ENCODE measurements at regions of chr1 and their contacts with region 1.

Region 1: GRCh38 chr1:38990738-38991639 is at the start of gene AKIRIN1:
- DNase-seq: peak; percentile 84
- ATAC-seq: peak; percentile 95
- H3K4me3 ChIP-seq: peak within 1 kb of the TSS; percentile 100
- H3K27ac ChIP-seq: peak within 1 kb of the TSS; percentile 85
- H3K4me1 ChIP-seq: no peaks in the 10 kb centered on the region
- H3K27me3 ChIP-seq: no peaks in the 10 kb centered on the region
- CTCF ChIP-seq: no peak
- EP300 ChIP-seq: no peak
- POLR2A ChIP-seq: peak; percentile 99
- RAD21 ChIP-seq: no peak
- polyA plus RNA-seq, gene AKIRIN1: 7.5 to 16.3 TPM

Region 2: DNA sequence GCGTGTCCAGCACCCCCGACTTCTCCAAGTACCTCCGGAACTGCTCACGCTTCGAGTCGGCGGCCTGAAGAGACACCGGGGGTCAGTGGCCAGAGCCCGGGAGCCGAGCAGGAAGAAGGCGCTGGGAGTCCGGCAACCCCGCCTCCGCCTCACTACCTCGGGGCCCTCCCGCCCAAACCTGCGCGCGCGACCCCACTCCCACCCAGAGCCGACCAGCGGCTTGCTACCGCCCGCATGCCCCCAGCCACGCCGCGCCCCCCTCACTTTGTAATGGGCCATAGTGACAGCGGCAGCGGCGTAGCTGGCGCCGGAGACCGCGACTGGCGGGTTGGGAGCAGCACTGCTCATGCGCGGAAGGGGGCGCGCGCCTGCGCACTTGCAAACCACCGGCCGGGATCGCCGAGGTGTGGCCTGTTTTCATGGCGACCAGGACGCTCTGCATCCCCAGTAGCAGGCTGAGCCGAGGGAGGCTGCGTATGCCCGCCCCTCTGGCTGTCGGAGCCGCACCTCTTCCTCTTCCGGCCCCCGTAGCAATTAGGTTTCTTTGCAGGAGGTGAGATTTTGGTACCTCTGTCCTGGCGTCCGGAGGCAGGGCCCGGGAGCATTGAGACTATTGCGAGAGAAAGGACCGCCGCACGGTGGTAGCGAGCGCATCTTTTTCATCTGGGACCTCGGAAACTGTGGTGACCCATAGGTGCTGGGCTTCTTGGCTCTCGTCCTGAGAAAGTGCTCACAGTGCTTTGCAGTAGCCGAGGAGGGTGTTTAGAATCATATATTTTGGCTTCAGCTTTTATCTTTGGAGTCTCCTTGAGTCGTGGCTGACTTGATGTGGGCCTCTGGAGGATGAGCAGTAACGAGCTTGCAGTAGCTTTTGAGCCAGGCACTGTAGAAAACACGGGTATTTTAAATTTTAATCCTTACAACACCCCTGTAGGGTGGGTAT is 117.7 kb before region 1 on chr1 and contains the start of gene MYCBP:
- CTCF ChIA-PET with region 1: no interaction called
- POLR2A ChIA-PET with region 1: interaction called, 3 read pairs
- RAD21 ChIA-PET with region 1: interaction called, 4 read pairs
- SMC1A ChIA-PET with region 1: no interaction called
- in situ Hi-C with region 1: no loop called
- intact Hi-C with region 1: loop called (anchors 5 kb)
- DNase-seq: peak; percentile 92
- ATAC-seq: peak; percentile 99
- H3K4me3 ChIP-seq: peak within 1 kb of the TSS; percentile 82
- H3K27ac ChIP-seq: peak within 1 kb of the TSS; percentile 78
- H3K4me1 ChIP-seq: peaks cover 17% of the 10 kb centered on the region
- H3K27me3 ChIP-seq: no peaks in the 10 kb centered on the region
- CTCF ChIP-seq: 0 out of 6 replicates have a peak, but pooled peaks of 1 of the 3 experiments have one; percentile 1
- EP300 ChIP-seq: no peak
- POLR2A ChIP-seq: peak; percentile 77
- RAD21 ChIP-seq: no peak
- polyA plus RNA-seq, gene MYCBP: 124 to 152 TPM

Region 3: GRCh38 chr1:38964140-38964548 is 26.8 kb before region 1 on chr1:
- CTCF ChIA-PET with region 1: no interaction called
- POLR2A ChIA-PET with region 1: no interaction called
- RAD21 ChIA-PET with region 1: no interaction called
- SMC1A ChIA-PET with region 1: no interaction called
- in situ Hi-C with region 1: no loop called
- intact Hi-C with region 1: no loop called
- DNase-seq: no peak
- ATAC-seq: peak; percentile 82
- H3K4me3 ChIP-seq: no peak overlapping the region
- H3K27ac ChIP-seq: no peak overlapping the region
- H3K4me1 ChIP-seq: no peaks in the 10 kb centered on the region
- H3K27me3 ChIP-seq: no peaks in the 10 kb centered on the region
- CTCF ChIP-seq: peak; percentile 37 to 44 (median 43); a peak in 4 of 6 replicates
- EP300 ChIP-seq: no peak
- POLR2A ChIP-seq: no peak
- RAD21 ChIP-seq: peak; percentile 33

Region 4: DNA sequence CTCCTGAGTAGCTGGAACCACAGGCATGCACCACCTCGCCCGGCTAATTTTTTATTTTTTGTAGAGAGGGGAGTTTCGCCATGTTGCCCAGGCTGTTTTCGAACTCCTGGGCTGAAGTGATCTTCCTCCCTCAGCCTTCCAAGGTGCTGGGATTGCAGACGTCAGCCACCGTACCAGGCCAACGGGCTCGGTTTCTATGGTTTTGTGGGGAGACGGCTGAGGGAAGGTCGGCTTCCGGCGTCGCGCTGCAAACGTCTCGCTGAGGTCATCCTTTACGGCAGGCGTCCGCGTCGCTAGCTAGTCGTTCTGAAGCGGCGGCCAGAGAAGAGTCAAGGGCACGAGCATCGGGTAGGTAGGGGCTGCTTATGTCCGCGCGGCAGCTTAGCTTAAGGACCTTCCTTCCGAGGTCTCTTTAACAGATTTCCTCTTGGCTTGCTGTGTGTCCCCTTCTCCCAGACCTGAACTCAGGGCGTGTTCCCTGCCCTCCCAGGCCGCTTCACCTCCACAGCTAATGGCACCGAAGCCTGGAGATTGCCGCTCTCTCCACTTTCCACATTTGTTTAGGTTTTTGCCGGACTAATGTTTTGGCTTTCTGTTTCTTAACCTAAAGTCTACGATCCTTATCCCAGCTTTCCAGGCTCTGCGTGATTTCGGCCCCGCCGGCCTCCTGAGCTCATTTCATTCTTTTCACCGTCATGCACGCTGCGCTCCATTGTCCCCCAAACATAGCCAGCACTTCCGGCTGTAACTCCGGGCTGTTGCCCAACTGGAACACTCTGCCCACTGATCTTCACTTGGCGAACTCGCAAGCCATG is 35.3 kb after region 1 on chr1 and contains the start of gene NDUFS5:
- CTCF ChIA-PET with region 1: interaction called, 4 read pairs
- POLR2A ChIA-PET with region 1: interaction called, 11 read pairs
- RAD21 ChIA-PET with region 1: interaction called, 4 read pairs
- SMC1A ChIA-PET with region 1: interaction called, 10 read pairs
- in situ Hi-C with region 1: no loop called
- intact Hi-C with region 1: loop called (anchors 2 kb)
- DNase-seq: peak; percentile 65
- ATAC-seq: peak; percentile 97
- H3K4me3 ChIP-seq: peak within 1 kb of the TSS; percentile 91
- H3K27ac ChIP-seq: peak within 1 kb of the TSS; percentile 90
- H3K4me1 ChIP-seq: peaks cover 7% of the 10 kb centered on the region
- H3K27me3 ChIP-seq: no peaks in the 10 kb centered on the region
- CTCF ChIP-seq: no peak
- EP300 ChIP-seq: 0 out of 4 replicates have a peak, but pooled peaks of 1 of the 2 experiments have one; percentile 48
- POLR2A ChIP-seq: peak; percentile 94
- RAD21 ChIP-seq: no peak
- polyA plus RNA-seq, gene NDUFS5: 1,576 to 1,578 TPM

Region 5: GRCh38 chr1:39091845-39092645 is 101.1 kb after region 1 on chr1:
- CTCF ChIA-PET with region 1: interaction called, 19 read pairs
- POLR2A ChIA-PET with region 1: no interaction called
- RAD21 ChIA-PET with region 1: interaction called, 5 read pairs
- SMC1A ChIA-PET with region 1: interaction called, 6 read pairs
- in situ Hi-C with region 1: no loop called
- intact Hi-C with region 1: no loop called
- DNase-seq: no peak
- ATAC-seq: peak; percentile 89
- H3K4me3 ChIP-seq: no peak overlapping the region
- H3K27ac ChIP-seq: no peak overlapping the region
- H3K4me1 ChIP-seq: peaks cover 6% of the 10 kb centered on the region
- H3K27me3 ChIP-seq: no peaks in the 10 kb centered on the region
- CTCF ChIP-seq: peak; percentile 71 to 78 (median 78)
- EP300 ChIP-seq: no peak
- POLR2A ChIP-seq: no peak
- RAD21 ChIP-seq: peak; percentile 82